Mammary epithelial cell (primary cell): ENCODE measurements at regions of chr3 and their contacts with region 1.

Region 1: DNA sequence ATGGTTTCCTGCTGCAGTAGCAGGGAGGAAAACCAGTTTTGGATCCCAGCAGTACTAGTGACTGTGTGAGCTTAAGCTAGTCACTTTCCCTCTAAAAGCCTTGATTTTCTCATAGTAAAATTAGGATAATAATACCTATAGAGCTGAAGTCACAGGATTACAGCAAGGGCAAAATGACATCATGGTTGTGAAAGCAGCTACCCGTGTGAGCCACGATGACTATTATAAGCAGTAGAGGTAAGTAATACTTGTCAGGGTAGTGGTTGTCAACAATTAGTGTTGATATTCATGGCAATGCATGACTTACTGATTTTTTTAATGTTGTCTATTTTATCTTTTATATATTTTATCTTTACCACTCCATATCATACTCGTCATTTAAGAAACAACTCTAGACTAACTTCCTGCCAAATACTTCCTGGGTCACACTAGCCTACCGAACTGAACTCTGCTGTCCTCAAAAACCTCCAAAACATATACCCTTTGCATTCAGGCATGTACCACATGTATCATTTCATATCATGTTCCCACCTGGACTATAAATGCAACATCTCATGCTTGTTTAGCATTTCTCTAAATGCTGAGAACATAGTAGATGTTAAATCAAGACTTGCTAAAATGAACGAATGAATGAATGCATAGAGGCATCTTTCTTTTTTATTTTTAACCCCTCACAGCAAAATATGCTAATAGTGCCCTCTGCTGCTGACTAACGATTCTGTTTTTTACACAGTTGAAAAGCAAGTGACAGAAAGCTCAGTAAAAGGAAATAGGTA is 172.6 kb downstream of the P3H2 start:
- DNase-seq: peak; percentile 68
- H3K4me3 ChIP-seq: no peak overlapping the region
- H3K27ac ChIP-seq: peak overlapping the region; percentile 21
- H3K4me1 ChIP-seq: peaks cover 29% of the 10 kb centered on the region
- H3K27me3 ChIP-seq: no peaks in the 10 kb centered on the region
- CTCF ChIP-seq: peak; percentile 64 to 69

Region 2: DNA sequence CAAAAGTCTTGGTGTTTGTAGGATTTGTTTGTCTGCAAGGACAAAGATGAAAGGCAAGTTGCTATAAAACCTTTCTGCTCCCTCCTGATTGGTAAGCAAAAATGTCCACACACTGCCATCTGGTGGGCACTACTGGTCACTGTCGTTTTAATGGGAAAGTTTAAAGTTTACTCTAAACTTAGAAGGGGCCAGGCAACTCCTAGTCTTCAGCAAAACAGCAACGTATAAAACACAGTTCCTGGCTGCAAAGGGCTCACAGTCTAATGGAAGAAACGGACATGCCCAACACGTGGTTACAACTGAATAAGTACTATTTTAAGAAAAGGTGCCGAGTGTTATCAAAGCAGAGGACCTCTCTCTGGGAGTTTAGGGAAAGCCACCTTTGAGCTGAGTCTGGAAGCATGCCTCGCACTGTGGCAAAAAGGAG is 800.0 kb before region 1 on chr3:
- CTCF ChIA-PET with region 1: no interaction called
- dilution Hi-C with region 1: no loop called
- in situ Hi-C with region 1: no loop called
- intact Hi-C with region 1: loop called (anchors 5 kb)
- DNase-seq: peak; percentile 37
- H3K4me3 ChIP-seq: no peak overlapping the region
- H3K27ac ChIP-seq: no peak overlapping the region
- H3K4me1 ChIP-seq: no peaks in the 10 kb centered on the region
- H3K27me3 ChIP-seq: no peaks in the 10 kb centered on the region
- CTCF ChIP-seq: peak; percentile 76 to 86

Region 3: DNA sequence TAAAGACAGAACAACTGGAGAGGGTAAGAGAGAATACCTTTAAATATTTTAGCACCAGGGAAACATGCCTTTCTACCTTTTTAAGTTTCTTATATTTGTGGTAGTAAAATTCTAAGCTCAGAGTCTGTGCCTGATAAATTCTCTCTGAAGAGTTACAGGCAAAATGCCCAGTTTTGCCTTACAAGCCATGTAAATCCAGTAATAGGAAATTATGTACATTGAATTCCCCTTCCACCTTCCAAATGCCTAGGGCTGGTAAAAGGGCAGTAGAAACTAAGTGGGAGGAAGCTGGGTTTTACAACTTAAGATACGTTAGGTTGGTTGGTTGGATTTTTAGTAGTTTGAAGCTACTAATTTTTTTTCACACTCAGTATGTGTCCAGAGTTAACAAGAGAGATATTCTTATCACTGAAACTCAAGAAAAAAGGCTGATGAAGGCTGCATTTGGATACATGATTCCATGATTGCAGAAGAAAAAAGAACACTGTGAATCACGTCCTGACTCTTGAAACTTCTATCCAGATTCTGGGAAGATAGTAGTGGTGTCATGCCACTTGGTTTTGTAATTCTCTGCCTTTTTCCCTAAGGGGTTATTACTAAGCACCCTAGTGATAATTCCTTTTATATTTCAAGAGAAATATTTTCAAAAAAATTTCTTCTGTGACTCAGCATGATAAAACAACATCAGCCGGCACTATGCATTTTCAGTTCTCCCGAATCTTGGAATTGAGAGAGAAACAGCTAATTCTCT is 359.9 kb before region 1 on chr3:
- CTCF ChIA-PET with region 1: no interaction called
- dilution Hi-C with region 1: no loop called
- in situ Hi-C with region 1: no loop called
- intact Hi-C with region 1: loop called (anchors 5 kb)
- DNase-seq: peak; percentile 90
- H3K4me3 ChIP-seq: peak overlapping the region; percentile 9 to 24 (median 9)
- H3K27ac ChIP-seq: peak overlapping the region; percentile 92
- H3K4me1 ChIP-seq: peaks cover 46% of the 10 kb centered on the region
- H3K27me3 ChIP-seq: no peaks in the 10 kb centered on the region
- CTCF ChIP-seq: no peak

Region 4: GRCh38 chr3:189652042-189652441 is 296.1 kb before region 1 on chr3:
- CTCF ChIA-PET with region 1: no interaction called
- dilution Hi-C with region 1: no loop called
- in situ Hi-C with region 1: no loop called
- intact Hi-C with region 1: loop called (anchors 10 kb)
- DNase-seq: peak; percentile 23
- H3K4me3 ChIP-seq: no peak overlapping the region
- H3K27ac ChIP-seq: no peak overlapping the region
- H3K4me1 ChIP-seq: no peaks in the 10 kb centered on the region
- H3K27me3 ChIP-seq: no peaks in the 10 kb centered on the region
- CTCF ChIP-seq: no peak

Region 5: GRCh38 chr3:189778340-189778950 is 169.7 kb before region 1 on chr3:
- CTCF ChIA-PET with region 1: no interaction called
- dilution Hi-C with region 1: no loop called
- in situ Hi-C with region 1: no loop called
- intact Hi-C with region 1: no loop called
- DNase-seq: no peak
- H3K4me3 ChIP-seq: no peak overlapping the region
- H3K27ac ChIP-seq: no peak overlapping the region
- H3K4me1 ChIP-seq: no peaks in the 10 kb centered on the region
- H3K27me3 ChIP-seq: no peaks in the 10 kb centered on the region
- CTCF ChIP-seq: no peak

Region 6: GRCh38 chr3:189792101-189792500 is 156.0 kb before region 1 on chr3:
- CTCF ChIA-PET with region 1: interaction called, 4 read pairs
- dilution Hi-C with region 1: no loop called
- in situ Hi-C with region 1: no loop called
- intact Hi-C with region 1: loop called (anchors 1 kb)
- DNase-seq: peak; percentile 74
- H3K4me3 ChIP-seq: peak overlapping the region; percentile 70 to 97 (median 92)
- H3K27ac ChIP-seq: peak overlapping the region; percentile 97
- H3K4me1 ChIP-seq: peaks cover 34% of the 10 kb centered on the region
- H3K27me3 ChIP-seq: no peaks in the 10 kb centered on the region
- CTCF ChIP-seq: no peak

Region 7: DNA sequence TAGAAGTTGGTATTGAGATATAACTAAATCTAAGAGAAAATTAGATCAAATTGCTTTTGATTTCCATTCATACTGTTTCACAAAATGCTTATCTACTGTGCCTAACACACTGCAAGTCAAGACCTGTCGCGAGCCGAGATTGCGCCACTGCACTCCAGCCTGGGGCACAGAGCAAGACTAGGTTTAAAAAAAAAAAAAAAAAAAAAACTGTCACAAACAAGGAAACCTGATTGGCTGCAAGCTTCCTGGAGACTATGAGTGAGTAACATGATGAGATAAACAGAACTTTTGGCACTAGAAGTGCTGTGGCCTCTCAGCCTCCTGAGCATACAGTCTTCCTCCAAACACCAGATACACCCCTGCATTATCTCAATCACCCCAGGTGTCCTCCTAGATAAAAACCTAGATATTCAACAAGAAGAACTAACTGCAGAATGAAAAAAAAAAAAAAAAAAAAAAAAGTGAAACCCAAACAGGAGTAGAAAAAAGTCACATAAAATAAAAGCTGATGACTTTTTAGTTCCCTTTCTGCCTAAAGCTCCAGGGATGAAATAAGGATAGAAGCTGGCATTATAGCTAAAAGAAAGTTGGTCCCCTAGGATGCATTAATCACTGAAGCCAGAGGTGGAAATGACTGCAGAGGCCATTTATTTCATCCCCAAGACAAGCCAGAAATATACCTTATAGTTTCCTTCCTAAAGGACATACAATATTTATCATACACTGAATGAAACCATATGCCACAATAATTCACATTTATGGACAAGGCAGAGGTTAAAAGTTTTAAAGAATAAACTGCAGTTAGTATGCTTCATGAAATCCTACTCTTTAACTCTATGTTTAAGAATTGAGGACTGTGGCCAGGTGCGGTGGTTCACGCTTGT is 90.2 kb after region 1 on chr3:
- CTCF ChIA-PET with region 1: no interaction called
- dilution Hi-C with region 1: loop called (anchors 10 kb)
- in situ Hi-C with region 1: no loop called
- intact Hi-C with region 1: no loop called
- DNase-seq: peak; percentile 95
- H3K4me3 ChIP-seq: peak overlapping the region in 1 of 3 experiments; percentile 17
- H3K27ac ChIP-seq: peak overlapping the region; percentile 64
- H3K4me1 ChIP-seq: peaks cover 18% of the 10 kb centered on the region
- H3K27me3 ChIP-seq: no peaks in the 10 kb centered on the region
- CTCF ChIP-seq: no peak